Calu3 (cell line): ENCODE measurements at regions of chr5 and their contacts with region 1.

Region 1: GRCh38 chr5:13976867-13977830 is 32.7 kb upstream of the DNAH5 start:
- DNase-seq: peak; percentile 67
- H3K4me3 Mint-ChIP-seq: no peak overlapping the region
- H3K27ac Mint-ChIP-seq: no peak overlapping the region
- H3K4me1 Mint-ChIP-seq: no peaks in the 10 kb centered on the region
- H3K27me3 Mint-ChIP-seq: no peaks in the 10 kb centered on the region
- CTCF ChIP-seq: peak; percentile 49

Region 2: DNA sequence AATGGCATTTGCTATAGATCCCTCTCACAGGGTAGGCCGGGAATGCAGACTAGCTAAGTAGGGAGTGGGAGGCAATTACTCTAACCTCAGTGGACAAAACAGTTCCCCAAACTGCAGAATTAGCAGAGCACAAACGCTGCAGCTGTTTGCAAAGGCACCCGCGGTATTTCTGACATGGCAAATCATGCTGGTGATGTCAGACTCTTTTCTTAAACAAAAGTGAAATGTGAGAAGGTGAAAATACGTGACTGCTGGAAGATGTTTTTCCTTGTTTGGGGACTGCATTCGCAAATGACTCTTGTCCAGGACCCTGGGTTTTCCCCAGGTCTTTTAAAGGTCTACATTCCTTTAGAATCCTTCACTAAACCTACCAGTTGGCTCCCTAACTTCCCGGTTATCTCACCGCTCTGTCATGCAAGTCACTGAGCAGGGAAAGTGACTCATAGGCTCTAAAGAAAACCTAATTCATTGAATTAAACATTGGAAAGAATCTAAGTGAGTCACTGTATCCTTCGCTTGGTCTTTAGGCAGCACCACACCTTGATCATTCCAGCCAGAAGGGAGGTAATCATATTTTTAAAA is 58.8 kb after region 1 on chr5:
- CTCF ChIA-PET with region 1: no interaction called
- intact Hi-C with region 1: no loop called
- DNase-seq: peak; percentile 85
- H3K4me3 Mint-ChIP-seq: peak overlapping the region; percentile 49
- H3K27ac Mint-ChIP-seq: peak overlapping the region; percentile 99
- H3K4me1 Mint-ChIP-seq: peaks cover 68% of the 10 kb centered on the region
- H3K27me3 Mint-ChIP-seq: no peaks in the 10 kb centered on the region
- CTCF ChIP-seq: no peak

Region 3: GRCh38 chr5:14322437-14323187 is 345.5 kb after region 1 on chr5:
- CTCF ChIA-PET with region 1: no interaction called
- intact Hi-C with region 1: loop called (anchors 5 kb)
- DNase-seq: no peak
- H3K4me3 Mint-ChIP-seq: no peak overlapping the region
- H3K27ac Mint-ChIP-seq: no peak overlapping the region
- H3K4me1 Mint-ChIP-seq: no peaks in the 10 kb centered on the region
- H3K27me3 Mint-ChIP-seq: no peaks in the 10 kb centered on the region
- CTCF ChIP-seq: no peak

Region 4: GRCh38 chr5:14364576-14365472 is 387.7 kb after region 1 on chr5:
- CTCF ChIA-PET with region 1: no interaction called
- intact Hi-C with region 1: loop called (anchors 5 kb)
- DNase-seq: peak; percentile 16
- H3K4me3 Mint-ChIP-seq: no peak overlapping the region
- H3K27ac Mint-ChIP-seq: no peak overlapping the region
- H3K4me1 Mint-ChIP-seq: no peaks in the 10 kb centered on the region
- H3K27me3 Mint-ChIP-seq: no peaks in the 10 kb centered on the region
- CTCF ChIP-seq: peak; percentile 53

Region 5: GRCh38 chr5:14428302-14429081 is 451.3 kb after region 1 on chr5:
- CTCF ChIA-PET with region 1: no interaction called
- intact Hi-C with region 1: no loop called
- DNase-seq: no peak
- H3K4me3 Mint-ChIP-seq: no peak overlapping the region
- H3K27ac Mint-ChIP-seq: no peak overlapping the region
- H3K4me1 Mint-ChIP-seq: no peaks in the 10 kb centered on the region
- H3K27me3 Mint-ChIP-seq: no peaks in the 10 kb centered on the region
- CTCF ChIP-seq: no peak